Right ventricle myocardium inferior (tissue), 1 donor: ENCODE measurements at regions of chr19 and their contacts with region 1.

Region 1: DNA sequence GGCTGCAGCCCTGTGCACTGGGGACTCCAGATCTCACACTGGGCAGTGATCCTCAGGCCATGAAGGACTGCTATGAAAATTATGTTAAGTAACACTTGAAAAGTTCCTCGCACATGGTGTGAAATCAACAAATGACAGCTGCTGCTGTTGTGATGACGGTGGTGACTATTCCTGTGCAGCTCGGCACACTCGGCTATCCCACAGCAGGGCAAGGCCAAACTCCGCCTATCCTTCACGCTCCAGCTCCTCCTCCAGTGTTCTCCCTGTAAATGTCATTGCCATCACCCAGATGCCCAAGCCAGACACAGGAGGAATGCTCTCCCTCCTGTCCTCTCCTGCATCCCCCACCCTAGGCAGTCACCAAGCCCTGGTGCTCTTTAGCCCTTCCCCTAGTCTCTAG is 31.3 kb downstream of the GRIK5 start:
- DNase-seq: no peak
- ATAC-seq: peak; percentile 91

Region 2: DNA sequence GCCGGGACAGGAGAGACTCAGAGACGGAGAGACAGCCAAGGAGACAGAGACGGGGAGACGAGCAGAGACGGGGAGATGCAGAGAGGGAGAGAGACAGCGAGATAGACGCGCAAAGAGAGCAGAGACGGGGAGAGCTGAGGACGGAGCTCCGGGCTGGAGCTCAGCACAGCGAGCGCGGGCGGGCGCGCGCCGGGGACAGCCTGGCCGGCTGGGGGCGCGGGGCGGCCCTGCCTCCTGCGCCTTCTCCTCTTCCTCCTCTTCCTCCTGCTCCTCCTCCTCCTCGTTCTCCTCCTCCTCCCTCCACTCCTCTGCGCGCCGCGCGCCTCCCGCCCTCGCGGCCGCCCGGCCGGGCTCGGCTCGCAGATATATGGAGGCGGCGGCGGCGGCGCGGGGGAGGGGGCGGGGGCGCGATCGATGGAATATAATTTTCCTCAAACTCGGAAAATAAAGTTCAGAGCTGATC is 110.4 kb before region 1 on chr19 and contains the start of gene ERFL:
- intact Hi-C with region 1: no loop called
- DNase-seq: no peak
- ATAC-seq: no peak
- total RNA-seq, gene ERFL: not detected

Region 3: GRCh38 chr19:42024622-42025111 is 14.0 kb before region 1 on chr19:
- intact Hi-C with region 1: loop called (anchors 2 kb)
- DNase-seq: peak; percentile 78
- ATAC-seq: peak; percentile 88

Region 4: GRCh38 chr19:42075616-42076379 is 37.1 kb after region 1 on chr19 and contains the start of gene ZNF574:
- intact Hi-C with region 1: loop called (anchors 2 kb)
- DNase-seq: peak; percentile 99
- ATAC-seq: peak; percentile 99
- total RNA-seq, gene ZNF574: 9.1 TPM

Region 5: GRCh38 chr19:42091742-42092141 is 53.1 kb after region 1 on chr19:
- intact Hi-C with region 1: no loop called
- DNase-seq: no peak
- ATAC-seq: no peak